ENCODE measurements at regions of chr19 and their contacts with region 1.

Region 1: DNA sequence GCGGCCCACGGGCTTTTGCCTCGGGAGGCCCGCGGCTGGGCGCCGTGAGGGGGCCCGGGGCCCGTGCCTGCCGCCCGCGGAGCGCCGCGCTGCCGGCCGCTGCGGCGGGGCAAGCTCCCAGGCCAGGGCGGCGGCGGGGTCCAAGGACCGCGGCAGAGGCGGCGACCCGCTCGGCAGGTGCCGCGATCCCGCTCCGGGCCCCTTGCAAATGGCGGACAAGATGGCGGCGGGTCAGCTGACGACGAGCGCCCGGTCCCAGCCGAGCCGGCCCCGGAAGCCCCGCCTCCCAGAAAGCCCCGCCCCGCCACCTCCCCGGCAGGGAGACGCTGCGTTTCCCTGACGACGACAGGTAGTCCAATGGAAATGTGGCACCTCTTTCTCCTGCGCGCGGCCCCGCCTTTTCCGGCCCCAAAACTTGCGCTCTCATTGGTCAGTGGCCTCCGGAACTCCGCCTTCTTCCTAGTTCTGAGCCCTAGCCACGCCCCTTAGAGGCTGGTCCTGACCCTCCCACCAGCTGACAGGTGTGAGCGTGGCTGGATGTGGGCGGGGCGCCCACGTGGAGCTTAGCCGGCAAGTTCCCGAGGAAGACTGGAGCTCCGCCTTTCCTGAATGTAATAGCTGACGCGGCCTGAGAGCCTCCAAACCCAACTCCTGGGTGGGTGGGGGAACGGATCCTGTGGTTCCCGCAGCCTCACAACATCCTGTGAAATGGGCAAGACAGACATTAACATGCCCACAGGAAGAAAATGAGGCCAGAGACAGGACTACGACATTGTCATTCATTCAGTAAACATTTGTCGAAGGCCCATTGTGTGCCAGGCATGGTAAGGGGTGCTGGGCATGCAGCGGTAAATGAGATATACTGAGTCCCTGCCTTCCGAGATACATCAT is at the start of gene AP3D1:
- DNase-seq: peak; percentile 99
- ATAC-seq: peak; percentile 99
- total RNA-seq, gene AP3D1: 71.8 TPM

Region 2: DNA sequence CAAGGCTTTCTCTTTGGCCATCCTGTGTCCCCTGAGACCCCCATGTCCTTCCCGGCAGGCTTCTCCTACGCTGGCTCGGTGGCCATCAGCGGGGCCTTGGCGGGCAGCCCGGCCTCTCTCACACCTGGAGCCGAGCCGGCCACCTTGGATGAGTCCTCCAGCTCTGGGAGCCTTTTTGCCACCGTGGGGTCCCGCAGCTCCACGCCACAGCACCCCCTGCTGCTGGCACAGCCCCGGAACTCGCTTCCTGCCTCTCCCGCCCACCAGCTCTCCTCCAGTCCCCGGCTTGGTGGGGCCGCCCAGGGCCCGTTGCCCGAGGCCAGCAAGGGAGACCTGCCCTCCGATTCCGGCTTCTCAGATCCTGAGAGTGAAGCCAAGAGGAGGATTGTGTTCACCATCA is 70.3 kb after region 1 on chr19:
- intact Hi-C with region 1: no loop called
- DNase-seq: no peak
- ATAC-seq: no peak

Region 3: DNA sequence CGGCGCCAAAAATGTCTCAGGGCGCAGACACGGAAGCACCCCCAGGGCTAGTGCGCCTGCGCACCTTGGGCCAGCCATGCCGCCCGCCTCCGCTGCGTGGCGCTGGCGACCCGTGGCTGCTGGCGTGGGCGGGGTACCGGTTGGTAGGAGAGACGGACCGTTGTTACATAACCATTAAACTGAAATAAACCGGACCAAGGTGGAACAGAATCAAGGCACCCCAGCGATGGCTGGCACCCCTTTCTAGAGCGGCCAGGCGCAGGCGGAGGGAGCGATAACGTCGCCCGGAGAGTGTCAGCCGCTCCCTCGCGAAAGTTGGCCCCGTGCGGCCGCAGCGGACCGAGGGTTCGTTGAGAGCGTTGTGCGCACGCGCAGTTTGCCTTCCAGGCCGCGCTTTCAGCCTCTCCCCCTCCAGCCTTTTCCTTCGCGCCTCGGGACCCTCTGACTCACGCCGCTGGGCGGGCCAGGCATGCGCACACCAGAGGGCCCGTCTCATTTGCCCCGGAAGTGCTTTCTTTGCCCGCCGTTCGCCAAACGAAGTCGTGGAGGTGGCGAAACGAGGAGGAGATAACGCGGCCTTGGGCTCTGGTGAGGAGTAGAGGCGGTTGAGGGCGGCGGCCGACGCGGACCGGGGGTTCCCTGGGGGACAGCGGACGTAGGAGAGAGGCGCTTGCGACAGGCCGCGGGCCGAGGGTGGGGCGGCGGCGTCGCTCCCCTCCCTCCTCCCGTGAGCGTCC is 84.9 kb after region 1 on chr19 and contains the starts of genes PLEKHJ1 and SF3A2:
- intact Hi-C with region 1: no loop called
- DNase-seq: peak; percentile 98
- ATAC-seq: peak; percentile 94
- total RNA-seq, gene PLEKHJ1: 59.7 TPM
- total RNA-seq, gene SF3A2: 30.3 TPM

Region 4: DNA sequence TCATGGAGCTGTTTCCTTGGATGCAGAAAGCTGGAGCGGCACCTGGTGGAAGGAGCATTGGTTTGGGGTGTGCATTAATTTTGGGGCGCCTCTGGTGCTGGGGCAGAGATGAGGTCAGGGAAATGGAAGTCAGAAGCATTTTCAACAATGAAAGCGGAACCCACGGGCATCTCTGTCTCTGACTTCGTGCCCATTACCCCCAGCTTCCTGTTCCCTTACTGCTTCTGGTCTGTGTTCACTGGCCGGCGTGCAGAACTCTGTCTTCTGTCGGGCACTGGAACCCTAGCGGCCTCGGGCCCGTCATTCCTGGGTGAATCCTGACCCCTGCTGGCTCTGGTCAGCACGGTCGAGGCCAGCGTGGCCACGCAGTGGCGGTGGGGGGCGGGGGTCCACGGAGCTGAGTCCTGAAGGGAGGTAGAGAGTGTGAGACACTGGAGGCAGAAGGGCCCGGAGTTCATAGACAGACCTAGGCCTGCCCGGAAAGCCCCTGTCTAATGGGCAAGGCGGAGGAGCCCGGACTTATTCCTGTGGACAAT is 164.3 kb after region 1 on chr19:
- intact Hi-C with region 1: loop called (anchors 1 kb)
- DNase-seq: peak; percentile 94
- ATAC-seq: peak; percentile 91

Region 5: GRCh38 chr19:2391118-2391725 is 239.6 kb after region 1 on chr19:
- intact Hi-C with region 1: loop called (anchors 1 kb)
- DNase-seq: no peak
- ATAC-seq: no peak